ENCODE measurements at regions of chr11 and their contacts with region 1.

Region 1: GRCh38 chr11:46188045-46188444 is 66.8 kb upstream of the PHF21A start:
- DNase-seq: no peak
- H3K4me3 Mint-ChIP-seq: no peak overlapping the region
- H3K27ac Mint-ChIP-seq: no peak overlapping the region
- H3K4me1 Mint-ChIP-seq: peaks cover 8% of the 10 kb centered on the region
- H3K27me3 Mint-ChIP-seq: peaks cover 97% of the 10 kb centered on the region
- CTCF ChIP-seq: no peak

Region 2: DNA sequence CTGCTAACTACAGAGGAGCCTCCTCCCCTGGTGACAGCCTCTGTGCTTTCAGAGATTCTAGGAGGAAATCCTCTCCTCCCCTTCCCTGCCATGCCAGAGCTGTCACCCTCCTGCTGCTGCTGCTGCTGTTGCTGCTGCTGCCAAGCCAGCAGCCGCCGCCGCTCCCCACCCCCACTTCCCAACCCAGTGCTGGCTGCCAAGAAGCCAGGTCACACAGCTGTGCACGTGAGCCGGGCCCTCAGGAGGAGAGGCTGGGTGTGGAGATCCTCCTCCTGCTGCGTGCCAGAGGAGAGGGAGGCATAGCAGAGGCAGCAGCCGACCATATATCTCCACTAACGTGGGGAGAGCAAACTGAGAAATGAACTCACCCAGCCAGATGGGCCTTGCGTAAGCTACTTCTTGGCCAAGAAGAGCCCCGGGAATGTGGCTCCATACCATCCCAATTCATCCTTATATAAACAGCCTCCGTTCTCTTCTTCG is 328.3 kb before region 1 on chr11:
- CTCF ChIA-PET with region 1: no interaction called
- intact Hi-C with region 1: no loop called
- DNase-seq: no peak
- H3K4me3 Mint-ChIP-seq: no peak overlapping the region
- H3K27ac Mint-ChIP-seq: no peak overlapping the region
- H3K4me1 Mint-ChIP-seq: no peaks in the 10 kb centered on the region
- H3K27me3 Mint-ChIP-seq: no peaks in the 10 kb centered on the region
- CTCF ChIP-seq: no peak

Region 3: DNA sequence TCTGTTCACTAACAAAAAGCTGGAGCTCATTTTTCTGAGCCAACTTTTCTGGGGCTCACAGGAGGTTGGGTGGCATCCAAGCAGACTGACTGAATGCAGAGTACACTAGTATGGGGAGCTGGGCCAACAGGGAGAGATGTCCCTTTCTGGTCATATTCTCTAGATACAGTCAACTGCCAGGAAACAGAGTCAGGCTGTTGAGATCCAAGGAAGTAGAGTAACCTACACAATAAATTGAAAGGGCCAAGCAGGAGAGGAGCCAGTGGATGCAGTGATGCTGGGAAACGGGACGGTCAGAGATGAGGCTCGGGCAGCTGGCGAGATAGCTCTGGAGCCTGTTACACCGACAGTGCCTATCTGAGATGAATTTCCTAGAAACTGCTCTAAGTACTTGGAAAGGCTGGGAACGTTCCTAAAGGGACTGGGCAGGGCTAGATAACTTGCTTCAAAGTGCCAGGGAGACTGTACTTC is 194.5 kb before region 1 on chr11:
- CTCF ChIA-PET with region 1: no interaction called
- intact Hi-C with region 1: no loop called
- DNase-seq: no peak
- H3K4me3 Mint-ChIP-seq: no peak overlapping the region
- H3K27ac Mint-ChIP-seq: no peak overlapping the region
- H3K4me1 Mint-ChIP-seq: no peaks in the 10 kb centered on the region
- H3K27me3 Mint-ChIP-seq: no peaks in the 10 kb centered on the region
- CTCF ChIP-seq: no peak

Region 4: DNA sequence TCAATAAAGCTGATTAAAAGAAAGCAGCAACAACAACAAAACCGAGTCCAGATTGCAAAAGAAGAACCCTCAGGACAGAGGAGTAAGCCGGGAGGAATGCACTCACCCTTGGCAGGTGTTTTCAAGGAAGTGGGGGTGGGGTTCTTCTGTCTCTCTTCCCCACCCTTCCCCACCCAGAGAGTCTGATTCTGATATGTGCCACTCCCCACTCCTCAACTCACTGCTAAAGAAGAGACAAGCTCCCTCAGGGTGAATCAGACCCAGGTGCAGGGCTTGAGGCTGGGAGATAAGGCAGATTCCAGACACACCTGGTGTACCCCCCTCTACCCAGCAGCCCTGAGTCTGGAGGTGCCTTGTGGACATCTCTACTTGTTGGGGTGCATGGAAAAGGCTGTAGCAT is 28.3 kb before region 1 on chr11:
- CTCF ChIA-PET with region 1: no interaction called
- intact Hi-C with region 1: loop called (anchors 2 kb)
- DNase-seq: no peak
- H3K4me3 Mint-ChIP-seq: no peak overlapping the region
- H3K27ac Mint-ChIP-seq: no peak overlapping the region
- H3K4me1 Mint-ChIP-seq: peaks cover 8% of the 10 kb centered on the region
- H3K27me3 Mint-ChIP-seq: peaks cover 65% of the 10 kb centered on the region
- CTCF ChIP-seq: no peak

Measured in Calu3 (cell line).